ENCODE measurements at regions of chr6 and their contacts with region 1.

Region 1: DNA sequence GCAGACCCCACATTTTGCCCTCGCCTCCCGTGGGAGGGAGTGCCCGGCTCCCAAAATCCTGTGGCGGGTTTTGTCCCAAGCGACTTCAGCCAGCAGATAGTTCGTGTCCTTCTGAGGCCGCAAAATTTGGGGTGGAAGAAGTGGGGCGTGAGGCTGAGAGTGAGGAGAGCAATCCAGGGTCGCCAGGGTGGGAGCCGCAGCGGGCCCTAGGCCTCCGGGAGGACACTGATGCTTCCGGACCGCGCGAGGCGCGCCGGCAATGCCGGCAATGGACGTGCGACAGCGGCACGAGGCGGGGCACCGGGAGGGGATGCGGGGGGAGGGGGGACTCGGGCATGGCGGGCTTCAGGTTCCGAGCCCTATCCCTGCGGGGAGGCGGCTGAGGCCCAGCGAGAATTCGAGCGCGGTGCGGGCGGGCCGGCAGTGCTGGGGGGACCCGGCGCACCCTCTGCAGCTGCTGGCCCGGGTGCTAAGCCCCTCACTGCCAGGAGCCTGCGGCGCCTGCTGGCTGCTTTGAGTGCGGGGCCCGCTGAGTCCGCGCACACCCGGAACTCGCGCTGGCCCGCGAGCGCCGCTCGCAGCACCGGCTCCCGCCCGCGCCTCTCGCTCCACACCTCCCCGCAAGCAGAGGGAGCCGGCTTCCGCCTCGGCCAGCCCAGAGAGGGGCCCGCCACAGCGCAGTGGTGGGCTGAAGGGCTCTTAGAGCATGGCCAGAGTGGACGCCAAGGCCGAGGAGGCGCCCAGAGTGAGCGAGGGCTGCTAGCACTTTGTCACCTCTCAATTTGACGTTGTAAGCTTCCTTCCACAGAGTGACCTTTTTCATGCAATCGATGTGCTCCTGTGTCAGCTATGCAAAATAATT is 143.8 kb downstream of the LPA start:
- DNase-seq: peak; percentile 34
- ATAC-seq: peak; percentile 93
- H3K4me3 ChIP-seq: peak overlapping the region; percentile 60
- H3K27ac ChIP-seq: peak overlapping the region; percentile 3; the same call in 1 of the 2 replicates
- H3K4me1 ChIP-seq: no peaks in the 10 kb centered on the region
- H3K27me3 ChIP-seq: no peaks in the 10 kb centered on the region
- CTCF ChIP-seq: no peak; the same call in 1 of the 2 replicates
- POLR2A ChIP-seq: no peak
- RAD21 ChIP-seq: peak; percentile 68

Region 2: GRCh38 chr6:160534050-160534696 is 13.9 kb after region 1 on chr6:
- CTCF ChIA-PET with region 1: interaction called, 10 read pairs
- POLR2A ChIA-PET with region 1: no interaction called
- dilution Hi-C with region 1: no loop called
- in situ Hi-C with region 1: no loop called
- intact Hi-C with region 1: loop called (anchors 2 kb)
- DNase-seq: peak; percentile 24
- ATAC-seq: peak; percentile 90
- H3K4me3 ChIP-seq: no peak overlapping the region
- H3K27ac ChIP-seq: no peak overlapping the region
- H3K4me1 ChIP-seq: no peaks in the 10 kb centered on the region
- H3K27me3 ChIP-seq: no peaks in the 10 kb centered on the region
- CTCF ChIP-seq: peak; percentile 73
- POLR2A ChIP-seq: no peak
- RAD21 ChIP-seq: peak; percentile 80

Region 3: GRCh38 chr6:160919723-160920440 is 399.6 kb after region 1 on chr6:
- CTCF ChIA-PET with region 1: no interaction called
- POLR2A ChIA-PET with region 1: no interaction called
- dilution Hi-C with region 1: no loop called
- in situ Hi-C with region 1: loop called (anchors 10 kb)
- intact Hi-C with region 1: no loop called
- DNase-seq: peak; percentile 83
- ATAC-seq: peak; percentile 84
- H3K4me3 ChIP-seq: no peak overlapping the region
- H3K27ac ChIP-seq: no peak overlapping the region
- H3K4me1 ChIP-seq: peaks cover 2% of the 10 kb centered on the region; the same call in 1 of the 2 replicates
- H3K27me3 ChIP-seq: no peaks in the 10 kb centered on the region
- CTCF ChIP-seq: no peak
- POLR2A ChIP-seq: no peak
- RAD21 ChIP-seq: no peak